Posterior vena cava (tissue), 2 donors: ENCODE measurements at regions of chr3 and their contacts with region 1.

Region 1: DNA sequence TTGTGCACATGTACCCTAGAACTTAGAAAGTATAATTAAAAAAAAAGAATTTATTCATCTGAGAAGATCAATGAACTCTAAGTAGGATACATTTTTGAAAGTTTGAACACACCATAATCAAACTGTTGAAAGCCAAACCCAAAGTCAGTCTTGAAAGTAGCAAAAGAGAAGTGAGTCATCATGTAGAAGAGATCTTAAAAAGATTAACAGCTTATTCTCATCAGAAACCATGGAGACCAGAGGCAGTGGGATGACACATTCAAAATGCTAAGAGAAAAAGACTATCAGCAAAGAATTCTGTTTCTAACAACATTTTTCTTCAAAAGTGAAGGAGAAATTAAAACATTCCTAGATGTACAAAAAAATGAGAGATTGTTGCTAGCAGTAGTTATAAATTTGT is 60.7 kb downstream of the TIMP4 start:
- DNase-seq: no peak

Region 2: DNA sequence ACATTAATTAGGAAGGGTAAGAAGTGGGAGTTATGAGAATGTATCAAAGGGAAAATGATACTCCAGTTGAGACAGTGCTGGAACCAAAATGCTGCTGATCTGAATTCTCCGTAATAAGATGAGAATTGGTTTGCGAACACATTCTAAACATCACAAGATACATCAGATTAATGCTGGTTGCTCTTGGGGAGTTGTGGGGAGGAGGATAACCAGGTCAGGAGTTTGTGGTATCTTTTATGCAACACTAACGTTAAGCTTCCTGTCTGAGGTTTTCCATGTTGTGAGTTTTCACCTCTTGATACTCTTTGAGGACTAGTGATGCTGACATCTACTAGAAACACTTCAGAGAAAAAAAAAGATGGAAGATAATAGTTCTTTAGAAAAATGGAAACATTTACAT is 238.1 kb after region 1 on chr3:
- intact Hi-C with region 1: no loop called
- DNase-seq: no peak

Region 3: GRCh38 chr3:12679468-12679867 is 581.5 kb after region 1 on chr3:
- intact Hi-C with region 1: loop called in 1 of 2 experiments (anchors 5 kb)
- DNase-seq: no peak